GM12878 (cell line): ENCODE measurements at regions of chr10 and their contacts with region 1.

Region 1: DNA sequence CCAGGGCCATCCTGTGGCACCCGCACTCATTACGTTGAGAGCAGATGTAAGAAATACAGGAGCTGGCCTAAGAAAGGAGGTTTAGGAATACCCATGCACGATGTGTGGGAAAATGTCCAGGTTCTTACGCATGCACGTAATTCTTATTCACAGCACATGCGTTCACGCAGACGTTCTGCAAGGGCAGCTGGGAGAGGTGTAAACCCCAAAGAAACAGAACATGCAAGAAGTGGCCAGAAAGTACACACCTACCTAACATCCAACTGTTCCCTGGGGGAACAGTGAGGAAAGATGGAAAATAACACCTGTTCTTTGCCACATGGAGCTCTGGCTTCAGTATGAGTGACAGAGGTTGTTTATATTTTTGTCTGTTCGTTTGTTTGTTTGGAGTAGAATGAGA is 285.6 kb downstream of the PRPF18 start:
- DNase-seq: no peak
- ATAC-seq: no peak
- H3K4me3 ChIP-seq: no peak overlapping the region
- H3K27ac ChIP-seq: no peak overlapping the region
- H3K4me1 ChIP-seq: peaks cover 5% of the 10 kb centered on the region; the same call in 1 of the 2 replicates
- H3K27me3 ChIP-seq: no peaks in the 10 kb centered on the region
- CTCF ChIP-seq: no peak
- EP300 ChIP-seq: no peak
- POLR2A ChIP-seq: no peak
- RAD21 ChIP-seq: no peak

Region 2: DNA sequence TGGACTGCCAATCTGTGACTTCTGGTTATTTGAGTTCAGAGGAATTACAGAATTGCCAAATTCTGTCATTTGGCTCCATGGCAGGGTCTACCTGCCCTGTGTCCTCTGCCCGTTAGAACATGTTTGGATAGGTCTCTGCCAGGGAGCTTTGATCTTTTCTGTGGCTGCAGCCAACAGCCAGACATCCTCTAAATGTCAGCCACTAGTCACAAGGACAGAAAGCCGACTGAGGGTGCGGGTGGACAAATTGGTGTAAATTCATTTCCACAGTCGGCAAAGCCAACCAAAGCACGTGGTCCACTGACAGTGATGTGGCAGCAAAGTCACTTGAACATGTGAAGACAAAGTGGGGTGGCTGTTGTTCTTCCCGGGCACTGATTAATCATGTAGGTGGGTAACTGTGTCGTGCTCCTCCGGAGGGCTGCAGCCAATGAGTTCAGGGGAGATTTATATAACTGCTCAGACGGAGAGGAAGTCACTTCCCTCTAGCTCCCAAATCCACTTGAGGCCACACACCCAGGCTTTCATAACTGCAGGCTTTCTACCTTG is 1549.8 kb before region 1 on chr10:
- CTCF ChIA-PET with region 1: no interaction called
- POLR2A ChIA-PET with region 1: interaction called, 10 read pairs
- RAD21 ChIA-PET with region 1: no interaction called
- SMC1A ChIA-PET with region 1: no interaction called
- in situ Hi-C with region 1: no loop called
- intact Hi-C with region 1: no loop called
- DNase-seq: no peak
- ATAC-seq: no peak
- H3K4me3 ChIP-seq: no peak overlapping the region
- H3K27ac ChIP-seq: no peak overlapping the region
- H3K4me1 ChIP-seq: no peaks in the 10 kb centered on the region
- H3K27me3 ChIP-seq: no peaks in the 10 kb centered on the region
- CTCF ChIP-seq: no peak
- EP300 ChIP-seq: no peak
- POLR2A ChIP-seq: no peak
- RAD21 ChIP-seq: no peak

Region 3: DNA sequence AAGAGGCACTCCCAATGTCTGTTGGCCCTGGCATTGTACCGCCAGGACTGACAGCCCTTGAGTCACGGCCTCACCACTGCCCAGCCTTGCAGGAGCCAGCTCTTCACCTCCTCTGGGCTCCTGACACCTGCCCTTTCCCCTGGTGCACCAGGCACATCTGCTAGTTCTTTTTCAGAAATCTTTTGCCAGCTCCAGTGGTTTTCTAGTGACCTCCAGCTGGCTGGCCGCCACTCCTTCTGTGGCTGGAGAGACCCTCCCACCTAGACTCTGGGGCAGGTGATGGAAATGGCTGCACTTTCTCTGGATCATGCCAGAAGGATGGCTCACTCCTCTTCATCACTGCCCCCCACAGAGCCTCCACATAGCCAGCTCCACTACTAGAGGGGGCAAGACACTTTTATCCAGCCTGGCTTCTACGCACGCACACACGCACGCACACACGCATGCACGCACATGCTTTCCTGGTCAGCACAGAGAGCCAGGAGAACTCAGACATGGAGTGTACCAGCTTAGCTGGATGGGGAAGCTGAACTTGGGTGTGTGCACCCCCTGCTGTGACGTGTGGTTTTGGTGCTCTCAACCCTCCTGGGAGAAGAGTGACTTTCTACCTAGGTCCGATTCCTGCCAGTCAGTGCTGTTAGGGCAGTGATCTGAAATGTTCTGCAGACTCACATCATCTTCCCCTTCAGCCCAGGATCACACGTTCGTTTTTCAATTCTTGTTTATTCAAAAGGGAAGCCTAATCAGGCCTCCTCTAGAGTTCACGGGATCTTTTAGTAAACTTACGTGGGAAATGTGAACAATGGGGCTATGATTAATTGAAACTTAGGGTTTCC is 63.6 kb before region 1 on chr10:
- CTCF ChIA-PET with region 1: no interaction called
- POLR2A ChIA-PET with region 1: no interaction called
- RAD21 ChIA-PET with region 1: no interaction called
- SMC1A ChIA-PET with region 1: no interaction called
- in situ Hi-C with region 1: no loop called
- intact Hi-C with region 1: no loop called
- DNase-seq: no peak
- ATAC-seq: peak; percentile 80
- H3K4me3 ChIP-seq: no peak overlapping the region
- H3K27ac ChIP-seq: no peak overlapping the region
- H3K4me1 ChIP-seq: peaks cover 12% of the 10 kb centered on the region
- H3K27me3 ChIP-seq: no peaks in the 10 kb centered on the region
- CTCF ChIP-seq: no peak
- EP300 ChIP-seq: 0 out of 4 replicates have a peak, but pooled peaks have one; percentile 7 to 9
- POLR2A ChIP-seq: no peak
- RAD21 ChIP-seq: no peak

Region 4: GRCh38 chr10:14200698-14201544 is 328.5 kb after region 1 on chr10:
- CTCF ChIA-PET with region 1: no interaction called
- POLR2A ChIA-PET with region 1: no interaction called
- RAD21 ChIA-PET with region 1: no interaction called
- SMC1A ChIA-PET with region 1: no interaction called
- in situ Hi-C with region 1: no loop called
- intact Hi-C with region 1: no loop called
- DNase-seq: no peak
- ATAC-seq: no peak
- H3K4me3 ChIP-seq: no peak overlapping the region
- H3K27ac ChIP-seq: no peak overlapping the region
- H3K4me1 ChIP-seq: no peaks in the 10 kb centered on the region
- H3K27me3 ChIP-seq: no peaks in the 10 kb centered on the region; a peak in 1 of 4 replicates
- CTCF ChIP-seq: peak; percentile 12 to 35 (median 24); a peak in 3 of 6 replicates
- EP300 ChIP-seq: no peak
- POLR2A ChIP-seq: no peak
- RAD21 ChIP-seq: no peak